Activated CD4-positive, alpha-beta T cell treated with anti-CD3 and anti-CD28 coated beads, Interleukin-2, amount 10 ng/mL, durations not matched to agents 7 days and 5 days (primary cell): ENCODE measurements at regions of chr5 and their contacts with region 1.

Region 1: GRCh38 chr5:140145818-140146522 is 20.2 kb downstream of the IGIP start:
- DNase-seq: peak; percentile 44
- H3K4me3 Mint-ChIP-seq: no peak overlapping the region
- H3K27ac Mint-ChIP-seq: no peak overlapping the region
- H3K4me1 Mint-ChIP-seq: peaks cover 13% of the 10 kb centered on the region
- H3K27me3 Mint-ChIP-seq: peaks cover 30% of the 10 kb centered on the region

Region 2: DNA sequence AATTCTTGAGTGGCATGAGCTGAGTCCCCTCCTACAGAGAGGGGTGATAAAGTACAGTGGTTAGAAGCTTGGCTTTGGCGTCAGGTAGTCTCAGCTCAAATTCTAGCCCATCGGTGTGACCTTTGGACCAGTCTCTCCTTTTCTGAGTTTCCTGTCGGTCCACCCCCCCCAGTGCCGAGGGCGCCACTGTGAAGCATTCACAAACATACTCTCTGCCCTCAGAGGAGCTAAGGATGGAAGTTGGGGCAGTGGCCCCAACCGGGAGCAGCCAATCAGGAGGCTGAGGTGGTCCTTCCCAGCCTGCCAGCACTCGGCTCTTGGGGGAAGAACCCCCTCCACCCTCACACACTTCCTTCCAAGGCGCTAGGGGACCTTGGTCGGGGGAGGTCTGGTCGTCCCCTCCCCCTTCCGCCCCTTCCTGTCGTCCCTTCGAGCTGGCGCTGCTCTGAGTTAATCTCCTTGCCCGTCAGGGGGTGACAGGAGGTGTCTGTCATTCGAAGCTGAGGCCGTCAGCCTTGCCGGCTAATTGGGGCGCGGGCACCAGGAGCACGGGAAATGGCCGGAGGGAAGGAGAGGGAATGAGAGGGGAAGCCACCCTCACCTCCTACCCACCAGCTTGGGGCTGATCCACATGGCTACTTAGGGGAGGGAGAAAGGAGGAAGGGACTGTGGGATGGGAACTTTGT is 444.8 kb before region 1 on chr5:
- CTCF ChIA-PET with region 1: no interaction called
- POLR2A ChIA-PET with region 1: no interaction called
- DNase-seq: no peak
- H3K4me3 Mint-ChIP-seq: no peak overlapping the region
- H3K27ac Mint-ChIP-seq: no peak overlapping the region
- H3K4me1 Mint-ChIP-seq: peaks cover 13% of the 10 kb centered on the region
- H3K27me3 Mint-ChIP-seq: peaks cover 33% of the 10 kb centered on the region

Region 3: DNA sequence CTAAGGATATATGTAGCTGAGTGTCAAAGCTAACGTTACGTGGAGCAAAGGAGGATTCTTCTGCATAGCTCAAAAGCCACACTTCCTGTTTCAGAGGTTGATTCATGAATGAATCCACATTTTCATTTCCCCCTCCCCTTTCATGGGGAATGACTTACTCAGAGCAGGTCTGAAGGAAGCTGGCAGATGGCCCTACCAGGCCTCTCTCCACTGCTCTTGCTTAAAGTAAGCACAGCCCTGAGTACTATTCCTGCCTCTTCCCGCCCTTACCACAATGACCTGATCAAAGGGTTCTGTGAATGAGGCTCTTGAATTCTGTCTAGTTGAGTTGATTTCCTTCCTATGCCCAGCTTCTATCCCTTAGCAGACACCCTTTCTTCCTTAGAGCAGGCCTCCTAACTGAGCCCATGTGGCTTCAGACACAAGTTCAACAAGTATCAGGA is 14.0 kb before region 1 on chr5:
- CTCF ChIA-PET with region 1: interaction called, 30 read pairs
- POLR2A ChIA-PET with region 1: no interaction called
- DNase-seq: no peak
- H3K4me3 Mint-ChIP-seq: no peak overlapping the region
- H3K27ac Mint-ChIP-seq: peak overlapping the region; percentile 2
- H3K4me1 Mint-ChIP-seq: peaks cover 36% of the 10 kb centered on the region
- H3K27me3 Mint-ChIP-seq: peaks cover 2% of the 10 kb centered on the region

Region 4: GRCh38 chr5:140432916-140433315 is 286.9 kb after region 1 on chr5:
- CTCF ChIA-PET with region 1: no interaction called
- POLR2A ChIA-PET with region 1: no interaction called
- DNase-seq: no peak
- H3K4me3 Mint-ChIP-seq: no peak overlapping the region
- H3K27ac Mint-ChIP-seq: no peak overlapping the region
- H3K4me1 Mint-ChIP-seq: peaks cover 10% of the 10 kb centered on the region
- H3K27me3 Mint-ChIP-seq: no peaks in the 10 kb centered on the region

Region 5: DNA sequence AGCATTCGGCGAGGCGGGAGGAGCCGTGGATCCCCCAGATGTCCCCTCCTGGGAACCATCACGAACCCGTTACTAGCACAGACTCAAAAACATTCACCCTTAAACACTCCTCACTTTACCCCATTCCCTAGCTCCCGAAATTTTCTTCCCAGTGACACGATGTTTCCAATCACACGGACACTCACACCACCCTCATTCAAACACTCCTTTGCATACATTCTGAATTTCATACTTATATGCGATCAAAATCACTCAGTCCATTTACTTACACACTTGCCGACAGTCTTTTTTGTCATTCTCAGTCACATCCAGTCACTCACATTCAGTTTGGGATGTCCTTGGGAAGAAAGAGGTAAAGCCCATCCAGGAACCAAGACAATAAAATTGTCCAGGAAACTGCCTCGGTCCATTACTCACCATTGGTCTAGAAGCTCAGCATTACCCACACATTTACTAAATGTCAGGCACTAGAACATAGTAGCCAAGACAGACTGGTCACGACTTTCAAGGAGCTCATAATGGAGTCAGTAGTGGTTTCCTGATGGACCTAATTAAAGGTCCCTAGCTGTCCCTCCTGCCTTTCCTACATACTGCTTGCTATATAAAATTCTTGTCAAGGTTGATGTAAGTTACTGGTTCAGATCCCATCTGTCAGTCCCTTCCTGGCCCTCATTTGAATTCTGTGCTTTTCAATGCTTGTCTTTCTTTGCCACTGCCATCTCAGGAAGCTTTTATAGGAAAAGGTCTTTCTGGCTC is 419.2 kb after region 1 on chr5:
- CTCF ChIA-PET with region 1: no interaction called
- POLR2A ChIA-PET with region 1: no interaction called
- DNase-seq: no peak
- H3K4me3 Mint-ChIP-seq: peak overlapping the region; percentile 94
- H3K27ac Mint-ChIP-seq: peak overlapping the region; percentile 95
- H3K4me1 Mint-ChIP-seq: peaks cover 67% of the 10 kb centered on the region
- H3K27me3 Mint-ChIP-seq: no peaks in the 10 kb centered on the region